Dorsolateral prefrontal cortex (tissue), 120 donors: ENCODE measurements at regions of chr3 and their contacts with region 1.

Region 1: GRCh38 chr3:150408221-150409102 is at the start of gene TSC22D2:
- DNase-seq: peak; percentile 92 to 98 (median 96)
- H3K4me3 ChIP-seq: peak within 1 kb of the TSS; percentile 70 to 96 (median 88)
- H3K27ac ChIP-seq: peak within 1 kb of the TSS; percentile 94 to 100 (median 99)
- H3K27me3 ChIP-seq: no peaks in the 10 kb centered on the region
- CTCF ChIP-seq: peak in 34 of 56 donors; percentile 2 to 50 (median 25)
- total RNA-seq, gene TSC22D2: 32.6 to 65.1 (median 45.0) TPM

Region 2: DNA sequence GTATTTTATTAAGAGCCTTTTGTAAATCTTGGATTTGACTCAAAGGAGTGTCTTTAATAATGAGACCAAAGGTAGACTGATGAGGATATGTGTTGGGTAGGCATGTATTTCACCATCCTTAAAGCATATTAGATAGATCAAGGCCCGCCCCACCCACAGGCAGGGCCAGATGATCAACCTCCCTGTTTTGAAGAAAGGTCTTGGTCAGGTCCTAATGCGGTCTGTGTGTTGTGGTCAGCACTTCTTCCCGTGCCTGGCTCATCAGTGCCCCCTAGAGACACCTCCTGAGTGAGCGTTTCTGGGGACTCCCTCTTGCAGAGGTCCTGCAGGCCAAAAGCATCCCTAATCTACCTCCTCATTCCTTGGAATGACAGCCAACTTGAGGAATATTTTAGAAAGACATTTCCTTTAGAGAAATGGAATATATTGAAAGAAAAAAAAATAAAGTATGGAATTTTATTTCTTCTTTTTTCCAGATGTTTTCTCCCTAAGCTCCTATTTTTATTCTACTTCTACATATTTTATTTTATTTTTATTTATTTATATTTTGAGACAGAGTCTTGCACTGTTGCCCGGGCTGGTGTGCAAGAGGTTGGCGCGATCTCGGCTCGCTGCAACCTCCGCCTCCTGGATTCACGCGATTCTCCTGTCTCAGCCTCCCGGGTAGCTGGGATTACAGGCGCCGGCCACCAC is 928.0 kb before region 1 on chr3:
- intact Hi-C with region 1: no loop called
- DNase-seq: peak in 9 of 10 donors; percentile 14 to 74 (median 54)
- H3K4me3 ChIP-seq: no peak overlapping the region
- H3K27ac ChIP-seq: peak overlapping the region in 11 of 59 donors; percentile 3 to 59 (median 25)
- H3K27me3 ChIP-seq: peaks cover 0 to 7% (median 0%) of the 10 kb centered on the region in 45 donors
- CTCF ChIP-seq: peak; percentile 39 to 89 (median 78)

Region 3: DNA sequence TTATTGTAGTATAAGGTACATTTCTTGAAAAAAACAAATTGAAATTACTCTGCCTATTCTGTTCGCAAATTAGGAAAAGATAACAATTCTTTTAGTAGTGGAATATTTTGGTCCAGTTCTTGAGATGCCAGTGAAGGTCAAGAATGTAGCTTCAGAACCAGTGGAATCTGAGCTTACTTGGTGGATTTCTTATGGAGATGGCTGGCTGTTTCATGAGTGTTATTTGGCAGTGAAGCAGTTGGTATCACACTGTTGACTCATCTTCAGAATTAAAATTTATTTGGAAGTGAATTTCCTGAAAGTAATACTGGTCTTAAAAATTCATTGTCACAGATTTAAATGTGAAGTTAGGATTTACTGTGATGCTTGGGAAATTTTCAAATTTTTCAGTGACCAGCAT is 576.4 kb before region 1 on chr3:
- intact Hi-C with region 1: no loop called
- DNase-seq: no peak
- H3K4me3 ChIP-seq: no peak overlapping the region
- H3K27ac ChIP-seq: no peak overlapping the region
- H3K27me3 ChIP-seq: no peaks in the 10 kb centered on the region
- CTCF ChIP-seq: no peak

Region 4: DNA sequence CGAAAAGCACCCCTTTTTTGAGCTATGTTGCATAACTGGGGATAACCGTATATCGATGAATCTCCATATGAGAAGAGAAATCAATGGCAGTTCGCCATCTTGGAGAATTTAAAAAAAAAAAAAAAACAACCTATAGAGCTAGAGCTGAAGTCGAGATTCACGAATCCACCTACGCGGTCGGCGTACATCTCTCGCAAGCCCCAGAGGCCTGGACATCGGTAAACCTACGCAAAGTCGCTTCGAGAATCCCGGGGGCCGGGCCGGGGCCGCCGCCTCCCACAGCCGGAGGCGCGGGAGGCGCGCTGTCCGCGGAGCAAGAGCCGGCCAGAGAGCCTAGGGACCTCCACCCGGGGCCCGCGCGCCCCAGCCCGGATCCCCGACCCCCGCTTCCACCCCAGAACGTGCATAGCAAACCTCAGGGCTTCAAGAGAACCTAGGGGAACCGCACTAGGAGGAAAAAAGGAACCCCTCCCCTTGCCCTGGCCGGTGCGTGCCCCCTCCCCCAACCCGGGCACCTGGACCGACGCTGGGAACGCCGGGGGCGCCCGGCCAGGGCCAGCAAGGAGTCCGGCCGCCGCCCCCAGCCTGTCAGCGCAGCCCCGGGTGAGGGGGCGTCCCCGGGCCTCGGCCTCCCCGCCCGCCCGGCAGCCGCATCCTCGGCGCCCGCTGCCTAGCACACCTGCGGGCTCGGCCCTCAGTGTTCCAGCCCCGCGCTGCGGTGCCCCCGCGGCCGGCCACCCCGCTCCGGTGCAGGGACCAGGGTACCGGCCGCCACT is 438.3 kb before region 1 on chr3:
- intact Hi-C with region 1: loop called (anchors 5 kb)
- DNase-seq: peak; percentile 80 to 91 (median 84)
- H3K4me3 ChIP-seq: peak overlapping the region; percentile 55 to 95 (median 82)
- H3K27ac ChIP-seq: peak overlapping the region; percentile 63 to 99 (median 94)
- H3K27me3 ChIP-seq: no peaks in the 10 kb centered on the region
- CTCF ChIP-seq: peak in 9 of 56 donors; percentile 8 to 32 (median 14)

Region 5: GRCh38 chr3:150237490-150237889 is 171.0 kb before region 1 on chr3:
- intact Hi-C with region 1: no loop called
- DNase-seq: peak in 2 of 10 donors; percentile 53 to 61
- H3K4me3 ChIP-seq: no peak overlapping the region
- H3K27ac ChIP-seq: peak overlapping the region in 3 of 59 donors; percentile 8 to 36 (median 16)
- H3K27me3 ChIP-seq: no peaks in the 10 kb centered on the region
- CTCF ChIP-seq: no peak

Region 6: DNA sequence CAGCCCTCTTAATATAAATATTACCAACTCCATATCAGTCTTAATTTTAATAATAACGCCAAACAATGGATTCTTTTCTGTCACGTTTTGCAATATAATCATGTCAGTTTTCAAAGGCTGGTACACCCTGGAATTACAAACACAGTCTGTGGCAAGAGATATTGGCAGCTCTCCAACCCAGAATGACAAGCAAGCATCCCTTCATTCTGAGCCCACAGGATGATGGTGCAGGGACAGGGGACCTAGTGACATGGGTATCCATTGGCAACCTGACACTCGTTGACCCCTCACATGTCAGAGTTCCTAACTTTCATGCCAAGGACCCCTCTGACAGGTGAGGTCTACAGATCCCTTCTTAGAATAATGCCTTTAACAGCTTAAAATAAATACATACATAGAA is 154.8 kb before region 1 on chr3:
- intact Hi-C with region 1: loop called in 1 of 2 experiments (anchors 10 kb)
- DNase-seq: no peak
- H3K4me3 ChIP-seq: no peak overlapping the region
- H3K27ac ChIP-seq: peak overlapping the region in 5 of 59 donors; percentile 11 to 69 (median 22)
- H3K27me3 ChIP-seq: no peaks in the 10 kb centered on the region
- CTCF ChIP-seq: no peak

Region 7: GRCh38 chr3:150371741-150372254 is 36.7 kb before region 1 on chr3:
- intact Hi-C with region 1: loop called in 1 of 2 experiments (anchors 5 kb)
- DNase-seq: no peak
- H3K4me3 ChIP-seq: peak overlapping the region in 54 of 59 donors; percentile 0 to 57 (median 32)
- H3K27ac ChIP-seq: peak overlapping the region in 50 of 59 donors; percentile 3 to 85 (median 58)
- H3K27me3 ChIP-seq: no peaks in the 10 kb centered on the region
- CTCF ChIP-seq: no peak

Region 8: GRCh38 chr3:150546226-150547044 is 138.0 kb after region 1 on chr3 and contains the starts of genes EIF2A and SERP1:
- intact Hi-C with region 1: loop called (anchors 2 kb)
- DNase-seq: peak; percentile 97 to 99 (median 98)
- H3K4me3 ChIP-seq: peak within 1 kb of the TSS; percentile 66 to 99 (median 93)
- H3K27ac ChIP-seq: peak within 1 kb of the TSS; percentile 72 to 99 (median 97)
- H3K27me3 ChIP-seq: no peaks in the 10 kb centered on the region
- CTCF ChIP-seq: peak in 32 of 56 donors; percentile 2 to 49 (median 24)
- total RNA-seq, gene EIF2A: 32.6 to 75.9 (median 53.3) TPM
- total RNA-seq, gene SERP1: 44.6 to 110 (median 64.5) TPM

Region 9: GRCh38 chr3:150763122-150763841 is 354.8 kb after region 1 on chr3 and contains the start of gene SIAH2:
- intact Hi-C with region 1: loop called in 1 of 2 experiments (anchors 10 kb)
- DNase-seq: peak; percentile 84 to 95 (median 90)
- H3K4me3 ChIP-seq: peak within 1 kb of the TSS; percentile 46 to 97 (median 85)
- H3K27ac ChIP-seq: peak within 1 kb of the TSS; percentile 92 to 100 (median 99)
- H3K27me3 ChIP-seq: no peaks in the 10 kb centered on the region
- CTCF ChIP-seq: peak in 10 of 56 donors; percentile 2 to 54 (median 16)
- total RNA-seq, gene SIAH2: 12.6 to 40.1 (median 22.1) TPM